ENCODE measurements at regions of chr1 and their contacts with region 1.

Region 1: DNA sequence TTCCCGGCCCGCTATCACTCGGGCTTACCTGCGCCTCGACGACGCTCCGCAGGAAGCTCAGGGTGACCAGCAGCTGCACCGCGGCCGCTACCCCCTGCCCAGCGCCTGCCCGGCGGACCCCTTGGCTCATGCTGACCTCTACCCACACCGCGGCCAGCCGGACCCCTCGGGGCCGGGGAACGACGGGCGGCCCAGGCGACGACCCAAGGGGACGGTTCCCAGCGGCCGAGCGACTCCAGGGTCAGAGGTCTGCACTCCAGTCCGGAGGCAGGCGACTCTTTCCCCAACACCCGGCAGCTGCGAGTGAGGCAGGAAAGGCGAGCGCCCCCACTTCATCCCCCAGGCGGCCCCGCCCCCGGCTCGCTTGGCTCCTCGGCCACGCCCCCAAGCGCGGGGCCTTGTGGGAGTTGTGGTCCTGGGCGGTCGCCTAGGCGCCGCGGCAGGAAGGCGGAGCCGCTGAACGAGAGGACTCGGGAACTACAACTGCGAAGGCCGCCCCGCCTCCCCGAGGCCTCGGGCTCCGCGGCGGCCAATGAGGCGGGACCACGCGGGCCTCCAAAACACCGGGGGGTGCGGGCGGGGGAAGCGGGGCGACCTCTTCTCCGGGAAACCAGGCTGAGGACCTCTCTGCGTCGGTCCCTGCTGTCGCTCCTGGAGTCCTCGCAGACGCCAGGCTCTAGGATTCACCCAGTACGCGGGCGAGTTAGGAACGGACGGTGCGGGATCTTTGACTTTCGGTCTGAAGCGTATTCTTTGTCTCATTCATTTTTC is at the start of gene ERO1B:
- DNase-seq: peak; percentile 100
- H3K4me3 Mint-ChIP-seq: peak within 1 kb of the TSS; percentile 89
- H3K27ac Mint-ChIP-seq: peak within 1 kb of the TSS; percentile 82
- H3K4me1 Mint-ChIP-seq: peaks cover 34% of the 10 kb centered on the region
- H3K27me3 Mint-ChIP-seq: peaks cover 9% of the 10 kb centered on the region
- total RNA-seq, gene ERO1B: 1.5 and 3.2 TPM in 2 replicates

Region 2: GRCh38 chr1:235878082-235878811 is 403.6 kb before region 1 on chr1:
- intact Hi-C with region 1: loop called (anchors 10 kb)
- DNase-seq: peak; percentile 58
- H3K4me3 Mint-ChIP-seq: peak overlapping the region; percentile 15
- H3K27ac Mint-ChIP-seq: peak overlapping the region; percentile 92
- H3K4me1 Mint-ChIP-seq: peaks cover 71% of the 10 kb centered on the region
- H3K27me3 Mint-ChIP-seq: no peaks in the 10 kb centered on the region

Region 3: GRCh38 chr1:236120721-236121153 is 161.1 kb before region 1 on chr1:
- intact Hi-C with region 1: loop called (anchors 1 kb)
- DNase-seq: peak; percentile 69
- H3K4me3 Mint-ChIP-seq: peak overlapping the region; percentile 70
- H3K27ac Mint-ChIP-seq: peak overlapping the region; percentile 34
- H3K4me1 Mint-ChIP-seq: peaks cover 33% of the 10 kb centered on the region
- H3K27me3 Mint-ChIP-seq: peaks cover 20% of the 10 kb centered on the region

Region 4: DNA sequence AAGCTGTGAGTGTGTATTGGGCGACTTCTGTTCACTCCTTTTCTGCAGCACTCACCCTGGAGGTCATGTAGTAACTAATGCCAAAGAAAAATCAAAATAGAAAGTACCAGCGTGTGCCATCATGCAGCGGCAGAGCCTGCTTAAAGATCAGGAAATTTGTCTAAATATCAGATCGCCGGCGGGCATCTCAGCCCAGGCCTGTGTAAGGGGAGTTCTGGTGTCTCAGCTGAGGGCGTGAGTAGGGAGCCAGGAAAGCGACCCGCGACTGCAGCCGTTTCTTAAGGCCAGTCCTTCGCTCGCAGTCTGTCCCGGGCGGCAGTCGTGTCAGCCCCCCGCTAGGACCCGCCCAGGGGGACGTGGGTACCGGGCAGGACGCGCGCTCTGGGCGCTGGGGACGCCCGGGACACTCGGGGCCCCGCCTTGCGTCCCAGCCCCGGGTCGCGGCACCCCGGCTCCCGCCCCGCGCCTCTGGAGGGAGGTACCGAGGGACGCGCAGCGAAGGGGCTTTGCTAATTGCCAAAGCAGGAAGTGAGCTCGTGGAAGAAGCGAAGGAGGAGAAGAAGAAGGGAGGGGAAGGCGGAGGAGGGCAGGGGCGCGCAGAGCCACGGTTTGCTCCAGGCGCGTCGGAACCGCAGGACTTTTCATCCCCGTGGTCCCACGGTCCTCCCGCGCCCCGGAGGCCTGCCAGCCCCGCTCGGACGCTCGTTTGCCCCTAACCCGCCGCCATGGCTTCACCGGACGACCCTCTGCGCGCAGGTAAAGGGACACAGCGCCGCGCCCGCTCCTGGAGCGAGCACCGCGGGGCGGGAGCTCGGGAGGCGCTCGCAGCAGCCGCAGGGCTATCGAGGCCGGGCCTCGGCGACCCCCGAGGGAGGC is 113.3 kb after region 1 on chr1:
- intact Hi-C with region 1: loop called (anchors 1 kb)
- DNase-seq: peak; percentile 89
- H3K4me3 Mint-ChIP-seq: peak overlapping the region; percentile 96
- H3K27ac Mint-ChIP-seq: peak overlapping the region; percentile 91
- H3K4me1 Mint-ChIP-seq: peaks cover 40% of the 10 kb centered on the region
- H3K27me3 Mint-ChIP-seq: peaks cover 26% of the 10 kb centered on the region

Region 5: GRCh38 chr1:236523701-236524141 is 241.9 kb after region 1 on chr1 and contains the start of gene LGALS8:
- intact Hi-C with region 1: loop called (anchors 5 kb)
- DNase-seq: peak; percentile 95
- H3K4me3 Mint-ChIP-seq: peak within 1 kb of the TSS; percentile 93
- H3K27ac Mint-ChIP-seq: peak within 1 kb of the TSS; percentile 98
- H3K4me1 Mint-ChIP-seq: peaks cover 19% of the 10 kb centered on the region
- H3K27me3 Mint-ChIP-seq: no peaks in the 10 kb centered on the region
- total RNA-seq, gene LGALS8: 68.9 and 71.9 TPM in 2 replicates

Region 6: DNA sequence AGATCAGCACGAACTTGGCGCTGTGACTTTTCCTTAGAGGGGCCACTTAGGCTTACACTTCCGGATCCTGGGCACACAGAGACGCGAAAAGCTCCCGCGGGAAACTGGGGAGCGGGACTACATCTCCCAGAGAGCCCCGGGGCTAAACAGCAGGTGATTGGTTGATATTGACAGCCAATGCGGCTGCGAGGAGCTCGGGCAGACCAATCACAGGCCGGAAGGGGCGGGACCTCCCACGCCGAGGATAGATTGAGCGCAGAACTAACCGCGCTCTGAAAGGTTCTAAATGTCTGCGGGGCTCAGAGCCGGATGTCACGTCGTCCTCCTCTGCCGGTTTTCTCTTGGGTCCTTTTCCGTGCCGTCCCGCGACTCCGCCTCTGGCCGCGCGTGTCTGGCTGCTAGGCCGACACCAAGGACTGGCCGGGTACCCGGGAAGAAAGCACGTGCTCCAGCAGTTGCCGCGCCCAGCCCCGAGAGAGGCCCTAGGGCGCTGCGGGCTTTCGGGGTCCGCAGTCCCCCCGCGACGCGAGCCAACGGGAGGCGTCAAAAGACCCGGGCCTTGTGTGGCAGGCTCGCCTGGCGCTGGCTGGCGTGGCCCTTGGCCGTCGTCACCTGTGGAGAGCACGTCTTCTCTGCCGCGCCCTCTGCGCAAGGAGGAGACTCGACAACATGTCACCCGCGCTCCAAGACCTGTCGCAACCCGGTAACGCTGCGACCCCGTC is 513.4 kb after region 1 on chr1 and contains the start of gene MTR:
- intact Hi-C with region 1: loop called (anchors 5 kb)
- DNase-seq: peak; percentile 99
- H3K4me3 Mint-ChIP-seq: peak within 1 kb of the TSS; percentile 92
- H3K27ac Mint-ChIP-seq: peak within 1 kb of the TSS; percentile 94
- H3K4me1 Mint-ChIP-seq: peaks cover 28% of the 10 kb centered on the region
- H3K27me3 Mint-ChIP-seq: peaks cover 9% of the 10 kb centered on the region
- total RNA-seq, gene MTR: 50.7 and 51.8 TPM in 2 replicates

Measured in activated CD4-positive, alpha-beta T cell treated with anti-CD3 and anti-CD28 coated beads, Interleukin-2, amount 10 ng/mL, durations not matched to agents 24 days and 14 days (primary cell).